Endothelial cell of umbilical vein (primary cell): ENCODE measurements at regions of chr12 and their contacts with region 1.

Region 1: DNA sequence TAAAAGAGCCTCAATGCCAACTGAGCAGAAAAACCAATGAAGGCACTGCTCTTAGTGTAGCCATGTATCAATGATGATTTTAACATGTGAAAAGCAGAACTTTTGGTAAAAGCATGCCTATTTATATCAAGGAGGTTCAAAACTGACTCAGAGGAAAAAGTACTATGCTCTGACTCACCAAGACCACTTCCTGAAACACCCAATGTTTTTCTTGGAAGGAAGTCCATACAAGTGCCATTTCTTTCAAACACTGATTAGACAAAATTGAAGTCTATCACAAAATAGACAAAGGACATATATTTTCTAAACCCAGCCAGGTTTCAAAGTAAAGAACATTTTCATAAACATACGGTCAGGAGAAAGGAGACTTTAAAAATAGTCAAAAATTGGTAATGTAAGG is 88.6 kb downstream of the EPS8 start:
- DNase-seq: peak; percentile 93
- H3K4me3 ChIP-seq: no peak overlapping the region
- H3K27ac ChIP-seq: peak overlapping the region; percentile 90
- H3K4me1 ChIP-seq: peaks cover 36% of the 10 kb centered on the region
- H3K27me3 ChIP-seq: no peaks in the 10 kb centered on the region
- CTCF ChIP-seq: no peak
- POLR2A ChIP-seq: peak; percentile 44

Region 2: DNA sequence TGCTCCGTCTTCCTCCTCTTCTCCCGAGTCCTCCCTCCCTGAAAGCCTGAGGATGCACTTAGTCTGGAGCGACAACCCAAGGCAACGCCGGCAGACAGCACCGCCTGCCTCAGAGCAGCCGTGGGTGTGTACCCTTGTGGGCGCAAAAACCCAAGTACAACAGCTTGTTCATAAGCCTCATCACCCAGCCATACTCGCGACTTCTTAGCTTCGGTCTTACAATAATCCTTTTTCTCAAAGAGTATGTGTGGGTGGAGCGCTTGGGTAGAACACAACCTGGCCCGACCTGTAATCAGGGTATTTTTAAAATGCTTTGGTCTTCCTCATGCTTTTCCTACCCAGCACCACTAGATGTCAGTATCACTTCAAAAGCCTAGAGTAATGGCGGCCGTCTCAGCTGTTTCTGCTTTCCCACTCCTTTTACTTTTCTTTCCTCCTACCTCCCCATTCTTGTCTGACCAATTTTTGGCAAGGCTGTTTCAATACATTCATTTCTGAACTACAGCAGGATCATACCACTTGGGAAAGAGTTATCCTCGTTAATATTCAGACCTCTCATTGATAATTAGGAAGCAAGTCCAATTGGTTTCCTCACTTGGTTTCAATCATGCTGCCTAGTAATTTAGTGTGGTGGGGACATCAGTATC is 110.3 kb before region 1 on chr12:
- CTCF ChIA-PET with region 1: interaction called, 3 read pairs
- POLR2A ChIA-PET with region 1: no interaction called
- dilution Hi-C with region 1: no loop called
- intact Hi-C with region 1: loop called (anchors 2 kb)
- DNase-seq: peak; percentile 70
- H3K4me3 ChIP-seq: peak overlapping the region in 2 of 3 experiments; percentile 24 to 32
- H3K27ac ChIP-seq: no peak overlapping the region
- H3K4me1 ChIP-seq: peaks cover 6% of the 10 kb centered on the region
- H3K27me3 ChIP-seq: peaks cover 5 to 11% of the 10 kb centered on the region in 2 experiments
- CTCF ChIP-seq: peak; percentile 79 to 80
- POLR2A ChIP-seq: no peak

Region 3: DNA sequence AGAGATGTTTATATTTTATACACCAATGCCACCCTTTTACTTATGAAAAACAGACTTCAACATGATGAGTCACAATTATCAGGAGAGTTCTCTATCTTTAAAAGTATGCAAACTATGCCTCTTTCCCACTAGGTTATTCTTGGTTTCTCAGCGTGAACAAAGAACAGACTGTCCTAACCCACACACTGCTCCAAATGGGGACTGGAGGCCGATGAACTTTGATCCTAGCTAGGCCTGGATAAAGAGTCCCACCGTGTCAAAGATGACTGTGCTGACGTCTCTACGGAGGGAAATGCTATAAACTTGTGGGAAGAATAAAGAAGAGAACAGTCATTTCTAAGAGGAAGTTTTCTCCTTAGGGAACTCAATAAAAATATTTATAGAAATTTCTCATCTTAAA is 71.5 kb before region 1 on chr12:
- CTCF ChIA-PET with region 1: no interaction called
- POLR2A ChIA-PET with region 1: no interaction called
- dilution Hi-C with region 1: no loop called
- intact Hi-C with region 1: loop called (anchors 2 kb)
- DNase-seq: peak; percentile 90
- H3K4me3 ChIP-seq: no peak overlapping the region
- H3K27ac ChIP-seq: peak overlapping the region; percentile 94
- H3K4me1 ChIP-seq: peaks cover 54% of the 10 kb centered on the region
- H3K27me3 ChIP-seq: no peaks in the 10 kb centered on the region
- CTCF ChIP-seq: no peak
- POLR2A ChIP-seq: no peak

Region 4: GRCh38 chr12:15662303-15662980 is 38.2 kb before region 1 on chr12:
- CTCF ChIA-PET with region 1: interaction called, 3 read pairs
- POLR2A ChIA-PET with region 1: no interaction called
- dilution Hi-C with region 1: no loop called
- intact Hi-C with region 1: loop called (anchors 5 kb)
- DNase-seq: peak; percentile 61
- H3K4me3 ChIP-seq: no peak overlapping the region
- H3K27ac ChIP-seq: peak overlapping the region; percentile 66
- H3K4me1 ChIP-seq: peaks cover 16% of the 10 kb centered on the region
- H3K27me3 ChIP-seq: no peaks in the 10 kb centered on the region
- CTCF ChIP-seq: no peak
- POLR2A ChIP-seq: no peak

Region 5: DNA sequence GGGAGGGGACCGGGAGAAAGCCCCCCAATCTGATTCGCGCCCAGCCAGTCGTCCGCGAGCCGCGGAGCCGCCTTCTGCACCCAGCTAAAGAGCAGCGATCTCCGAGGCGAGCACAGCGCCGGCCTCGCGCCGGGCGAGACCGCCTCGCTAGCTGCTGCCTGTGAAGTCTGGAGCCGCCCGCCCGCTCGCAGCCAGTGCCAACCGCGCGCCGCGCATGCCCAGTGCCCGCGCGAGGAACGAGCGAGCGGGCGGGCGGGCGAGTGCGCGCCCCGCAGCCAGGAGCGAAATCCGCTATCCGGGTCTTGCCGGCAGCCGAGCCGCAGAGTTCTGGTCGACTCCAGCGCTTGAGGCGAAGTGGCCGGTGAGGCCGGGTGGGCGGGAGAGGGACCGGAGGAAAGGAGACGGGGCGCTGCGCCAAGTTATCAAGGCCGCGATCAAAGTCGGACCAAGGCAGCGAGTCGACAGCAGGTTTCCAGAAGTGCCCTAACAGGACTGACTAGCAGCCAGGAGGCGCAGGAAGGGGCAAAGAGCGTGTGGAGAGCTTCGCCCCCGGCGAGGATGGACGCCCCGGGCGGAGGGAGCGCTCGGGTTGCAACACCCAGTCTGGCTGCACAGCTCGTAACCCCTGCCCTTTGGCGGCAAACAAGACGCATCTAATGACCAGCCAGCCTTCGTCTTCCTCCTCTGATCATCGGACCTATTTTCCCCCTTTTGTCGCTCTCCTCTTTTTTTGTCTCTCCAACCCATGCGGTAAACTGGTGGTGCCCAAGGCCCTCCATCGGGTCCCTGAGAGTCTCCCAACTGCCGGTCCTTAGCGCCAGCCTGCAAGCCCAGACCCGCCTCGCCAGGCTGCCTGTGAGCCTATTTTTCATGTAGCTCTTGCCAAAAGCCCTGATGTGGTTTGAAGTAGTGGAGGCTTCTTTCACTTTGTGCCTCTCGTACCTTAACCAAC is 88.9 kb after region 1 on chr12 and contains the start of gene EPS8:
- CTCF ChIA-PET with region 1: no interaction called
- POLR2A ChIA-PET with region 1: no interaction called
- dilution Hi-C with region 1: no loop called
- intact Hi-C with region 1: loop called (anchors 1 kb)
- DNase-seq: peak; percentile 94
- H3K4me3 ChIP-seq: peak within 1 kb of the TSS; percentile 49 to 83 (median 83)
- H3K27ac ChIP-seq: peak within 1 kb of the TSS; percentile 52
- H3K4me1 ChIP-seq: peaks cover 13% of the 10 kb centered on the region
- H3K27me3 ChIP-seq: no peaks in the 10 kb centered on the region
- CTCF ChIP-seq: no peak
- POLR2A ChIP-seq: peak; percentile 59
- total RNA-seq, gene EPS8: 11.9 and 12.1 TPM in 2 replicates